Caco-2 (cell line): ENCODE measurements at regions of chr14 and their contacts with region 1.

Region 1: GRCh38 chr14:77457522-77458290 is at the starts of genes AHSA1 and VIPAS39:
- DNase-seq: peak; percentile 95 to 98
- H3K4me3 ChIP-seq: peak within 1 kb of the TSS; percentile 98
- H3K4me3 Mint-ChIP-seq: peak within 1 kb of the TSS; percentile 98
- H3K27ac Mint-ChIP-seq: peak within 1 kb of the TSS; percentile 99
- H3K4me1 ChIP-seq: 0 out of 2 replicates have a peak, but pooled peaks cover 3% of the 10 kb centered on the region
- H3K4me1 Mint-ChIP-seq: peaks cover 10% of the 10 kb centered on the region
- H3K27me3 ChIP-seq: no peaks in the 10 kb centered on the region
- H3K27me3 Mint-ChIP-seq: no peaks in the 10 kb centered on the region
- CTCF ChIP-seq: no peak
- total RNA-seq, gene AHSA1: 161 and 193 TPM in 2 replicates
- total RNA-seq, gene VIPAS39: 20.0 and 20.7 TPM in 2 replicates

Region 2: GRCh38 chr14:77320238-77320935 is 137.3 kb before region 1 on chr14 and contains the start of gene POMT2:
- CTCF ChIA-PET with region 1: interaction called, 5 read pairs
- POLR2A ChIA-PET with region 1: no interaction called
- intact Hi-C with region 1: loop called (anchors 5 kb)
- DNase-seq: peak; percentile 95 to 96
- H3K4me3 ChIP-seq: peak within 1 kb of the TSS; percentile 98
- H3K4me3 Mint-ChIP-seq: peak within 1 kb of the TSS; percentile 99
- H3K27ac Mint-ChIP-seq: peak within 1 kb of the TSS; percentile 100
- H3K4me1 ChIP-seq: peaks cover 11% of the 10 kb centered on the region
- H3K4me1 Mint-ChIP-seq: peaks cover 7% of the 10 kb centered on the region
- H3K27me3 ChIP-seq: no peaks in the 10 kb centered on the region
- H3K27me3 Mint-ChIP-seq: no peaks in the 10 kb centered on the region
- CTCF ChIP-seq: peak; percentile 25 to 71
- total RNA-seq, gene POMT2: 30.4 and 36.9 TPM in 2 replicates

Region 3: GRCh38 chr14:77376771-77377501 is 80.8 kb before region 1 on chr14 and contains the starts of genes SAMD15 and TMED8:
- CTCF ChIA-PET with region 1: interaction called, 5 read pairs
- POLR2A ChIA-PET with region 1: interaction called, 4 read pairs
- intact Hi-C with region 1: loop called (anchors 2 kb)
- DNase-seq: peak; percentile 83 to 91
- H3K4me3 ChIP-seq: peak within 1 kb of the TSS; percentile 73
- H3K4me3 Mint-ChIP-seq: no peak within 1 kb of the TSS
- H3K27ac Mint-ChIP-seq: no peak within 1 kb of the TSS
- H3K4me1 ChIP-seq: peaks cover 23% of the 10 kb centered on the region
- H3K4me1 Mint-ChIP-seq: peaks cover 32% of the 10 kb centered on the region
- H3K27me3 ChIP-seq: no peaks in the 10 kb centered on the region
- H3K27me3 Mint-ChIP-seq: no peaks in the 10 kb centered on the region
- CTCF ChIP-seq: peak in 1 of 2 experiments; percentile 38
- total RNA-seq, gene SAMD15: 0.82 and 1.5 TPM in 2 replicates
- total RNA-seq, gene TMED8: 13.3 and 14.1 TPM in 2 replicates

Region 4: DNA sequence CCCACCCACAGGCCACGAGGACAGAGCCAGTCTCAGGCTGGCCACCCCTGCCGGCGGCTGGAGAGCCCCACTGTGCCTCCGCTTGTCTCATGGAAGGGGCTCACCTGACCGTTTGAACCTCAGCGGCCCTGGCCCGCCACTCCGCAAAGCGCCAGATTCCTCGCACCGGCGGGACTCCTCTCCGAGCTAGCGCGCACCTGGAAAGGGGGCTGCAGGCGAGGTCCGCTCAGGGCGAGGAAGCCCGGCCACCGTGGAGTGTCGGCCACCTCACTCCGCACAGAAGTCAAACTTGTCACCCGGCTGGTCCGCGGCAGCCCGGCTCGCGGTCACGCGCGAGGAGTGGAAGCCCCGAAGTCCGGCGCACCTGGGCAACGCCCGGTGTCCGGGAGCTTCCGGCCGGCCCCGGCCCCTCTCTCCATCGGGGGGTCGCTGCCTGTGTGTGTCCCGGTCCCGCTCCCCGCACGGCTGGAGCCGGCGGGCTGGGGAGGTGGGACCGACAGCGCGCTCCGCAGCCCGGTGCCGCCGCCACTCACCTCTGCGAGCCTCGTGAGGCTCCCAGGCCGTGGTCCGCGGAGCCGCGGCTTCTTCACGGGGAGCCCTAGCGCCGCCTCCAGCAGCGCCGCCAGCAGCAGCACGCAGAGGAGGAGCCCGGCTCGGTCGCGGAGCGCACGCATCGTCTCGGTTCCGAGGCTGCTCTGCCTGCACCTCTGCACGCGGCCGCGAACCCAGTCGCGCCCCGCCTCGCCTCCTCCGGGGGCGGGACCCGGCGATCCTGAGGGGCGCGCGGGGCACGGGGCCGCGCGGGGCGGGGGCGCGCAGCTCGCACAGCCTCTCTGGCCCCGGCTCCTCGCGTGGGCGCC is 40.6 kb after region 1 on chr14 and contains the start of gene ISM2:
- CTCF ChIA-PET with region 1: interaction called, 3 read pairs
- POLR2A ChIA-PET with region 1: no interaction called
- intact Hi-C with region 1: loop called (anchors 1 kb)
- DNase-seq: peak; percentile 76 to 85
- H3K4me3 ChIP-seq: peak within 1 kb of the TSS; percentile 77
- H3K4me3 Mint-ChIP-seq: peak within 1 kb of the TSS; percentile 89
- H3K27ac Mint-ChIP-seq: peak within 1 kb of the TSS; percentile 28
- H3K4me1 ChIP-seq: peaks cover 4% of the 10 kb centered on the region; the same call in 1 of the 2 replicates
- H3K4me1 Mint-ChIP-seq: peaks cover 17% of the 10 kb centered on the region
- H3K27me3 ChIP-seq: no peaks in the 10 kb centered on the region
- H3K27me3 Mint-ChIP-seq: no peaks in the 10 kb centered on the region
- CTCF ChIP-seq: no peak
- total RNA-seq, gene ISM2: 10.6 and 13.3 TPM in 2 replicates

Region 5: DNA sequence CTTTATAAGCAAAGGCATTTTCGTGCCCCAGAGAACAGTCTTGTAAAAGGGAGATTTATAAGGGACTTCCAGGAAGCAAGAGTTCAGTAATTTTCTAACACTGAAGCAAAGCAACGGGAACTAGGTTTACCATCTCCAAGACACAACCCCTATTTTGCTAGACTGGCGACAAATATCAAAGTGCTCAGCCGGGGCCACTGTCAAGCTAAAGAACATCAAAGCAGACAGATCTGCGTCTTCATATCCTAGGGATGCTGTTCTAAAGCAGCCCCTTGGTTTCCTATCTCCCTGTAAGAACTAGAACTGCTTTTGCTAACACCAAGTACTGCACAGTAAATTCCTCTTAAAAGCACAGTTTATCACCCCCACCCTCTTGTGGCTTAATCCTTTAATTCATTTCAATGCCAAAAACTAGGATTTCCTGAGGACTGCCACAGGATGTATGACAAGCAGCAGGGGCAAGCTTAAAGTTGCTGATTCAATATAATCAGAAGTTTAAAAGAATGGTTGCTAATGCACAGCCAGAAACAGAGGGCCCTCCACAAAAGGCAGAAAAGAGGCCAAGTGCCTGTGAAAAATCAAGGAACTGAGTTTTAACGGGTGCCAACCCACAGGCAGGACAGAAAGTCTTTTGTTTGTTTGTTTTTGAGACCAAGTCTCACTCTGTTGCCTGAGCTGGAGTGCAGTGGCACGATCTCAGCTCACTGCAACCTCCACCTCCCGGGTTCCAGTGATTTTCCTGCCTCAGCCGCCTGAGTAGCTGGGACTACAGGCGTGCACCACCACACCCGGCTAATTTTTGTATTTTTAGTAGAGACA is 84.9 kb after region 1 on chr14:
- CTCF ChIA-PET with region 1: no interaction called
- POLR2A ChIA-PET with region 1: no interaction called
- intact Hi-C with region 1: no loop called
- DNase-seq: no peak
- H3K4me3 ChIP-seq: no peak overlapping the region
- H3K4me3 Mint-ChIP-seq: no peak overlapping the region
- H3K27ac Mint-ChIP-seq: no peak overlapping the region
- H3K4me1 ChIP-seq: peaks cover 26% of the 10 kb centered on the region
- H3K4me1 Mint-ChIP-seq: no peaks in the 10 kb centered on the region
- H3K27me3 ChIP-seq: no peaks in the 10 kb centered on the region
- H3K27me3 Mint-ChIP-seq: no peaks in the 10 kb centered on the region
- CTCF ChIP-seq: no peak

Region 6: GRCh38 chr14:77554207-77554606 is 96.5 kb after region 1 on chr14:
- CTCF ChIA-PET with region 1: interaction called, 7 read pairs
- POLR2A ChIA-PET with region 1: no interaction called
- intact Hi-C with region 1: loop called (anchors 1 kb)
- DNase-seq: no peak
- H3K4me3 ChIP-seq: no peak overlapping the region
- H3K4me3 Mint-ChIP-seq: no peak overlapping the region
- H3K27ac Mint-ChIP-seq: no peak overlapping the region
- H3K4me1 ChIP-seq: no peaks in the 10 kb centered on the region
- H3K4me1 Mint-ChIP-seq: no peaks in the 10 kb centered on the region
- H3K27me3 ChIP-seq: no peaks in the 10 kb centered on the region
- H3K27me3 Mint-ChIP-seq: no peaks in the 10 kb centered on the region
- CTCF ChIP-seq: no peak

Region 7: GRCh38 chr14:77616454-77617229 is 158.9 kb after region 1 on chr14 and contains the start of gene SPTLC2:
- CTCF ChIA-PET with region 1: no interaction called
- POLR2A ChIA-PET with region 1: no interaction called
- intact Hi-C with region 1: loop called (anchors 5 kb)
- DNase-seq: peak; percentile 99 to 100
- H3K4me3 ChIP-seq: peak within 1 kb of the TSS; percentile 92
- H3K4me3 Mint-ChIP-seq: peak within 1 kb of the TSS; percentile 81
- H3K27ac Mint-ChIP-seq: peak within 1 kb of the TSS; percentile 74
- H3K4me1 ChIP-seq: peaks cover 28% of the 10 kb centered on the region
- H3K4me1 Mint-ChIP-seq: peaks cover 30% of the 10 kb centered on the region
- H3K27me3 ChIP-seq: no peaks in the 10 kb centered on the region
- H3K27me3 Mint-ChIP-seq: no peaks in the 10 kb centered on the region
- CTCF ChIP-seq: peak; percentile 15 to 45
- total RNA-seq, gene SPTLC2: 45.8 and 49.6 TPM in 2 replicates